ENCODE measurements at regions of chr20 and their contacts with region 1.

Region 1: GRCh38 chr20:2742934-2743559 is 50.5 kb downstream of the EBF4 start:
- DNase-seq: peak; percentile 92
- H3K4me3 Mint-ChIP-seq: peak overlapping the region; percentile 66
- H3K27ac Mint-ChIP-seq: peak overlapping the region; percentile 79
- H3K4me1 Mint-ChIP-seq: peaks cover 31% of the 10 kb centered on the region
- H3K27me3 Mint-ChIP-seq: peaks cover 19% of the 10 kb centered on the region

Region 2: GRCh38 chr20:2680046-2680445 is 63.0 kb before region 1 on chr20:
- intact Hi-C with region 1: no loop called
- DNase-seq: no peak
- H3K4me3 Mint-ChIP-seq: no peak overlapping the region
- H3K27ac Mint-ChIP-seq: no peak overlapping the region
- H3K4me1 Mint-ChIP-seq: peaks cover 1% of the 10 kb centered on the region
- H3K27me3 Mint-ChIP-seq: peaks cover 28% of the 10 kb centered on the region

Region 3: DNA sequence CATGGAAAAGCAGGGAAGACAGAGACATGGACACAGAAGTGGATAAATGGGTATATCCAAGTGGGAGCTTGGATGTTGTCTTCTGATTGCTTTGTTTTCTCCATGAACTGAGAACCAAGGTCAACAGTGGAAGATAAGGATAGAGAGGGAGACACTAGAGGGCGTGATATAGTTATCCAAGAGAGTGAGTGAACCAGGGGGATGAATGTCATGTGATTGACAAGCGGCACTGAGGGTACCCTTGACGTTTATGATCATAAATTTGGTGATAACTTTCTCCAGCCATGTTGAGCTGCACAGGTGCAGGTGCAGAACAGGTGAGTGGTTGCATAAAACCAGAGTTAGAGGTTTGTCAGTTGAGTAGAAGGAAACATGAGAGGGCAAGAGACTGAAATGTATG is 29.8 kb before region 1 on chr20:
- intact Hi-C with region 1: loop called (anchors 1 kb)
- DNase-seq: peak; percentile 62
- H3K4me3 Mint-ChIP-seq: no peak overlapping the region
- H3K27ac Mint-ChIP-seq: no peak overlapping the region
- H3K4me1 Mint-ChIP-seq: no peaks in the 10 kb centered on the region
- H3K27me3 Mint-ChIP-seq: peaks cover 2% of the 10 kb centered on the region

Region 4: DNA sequence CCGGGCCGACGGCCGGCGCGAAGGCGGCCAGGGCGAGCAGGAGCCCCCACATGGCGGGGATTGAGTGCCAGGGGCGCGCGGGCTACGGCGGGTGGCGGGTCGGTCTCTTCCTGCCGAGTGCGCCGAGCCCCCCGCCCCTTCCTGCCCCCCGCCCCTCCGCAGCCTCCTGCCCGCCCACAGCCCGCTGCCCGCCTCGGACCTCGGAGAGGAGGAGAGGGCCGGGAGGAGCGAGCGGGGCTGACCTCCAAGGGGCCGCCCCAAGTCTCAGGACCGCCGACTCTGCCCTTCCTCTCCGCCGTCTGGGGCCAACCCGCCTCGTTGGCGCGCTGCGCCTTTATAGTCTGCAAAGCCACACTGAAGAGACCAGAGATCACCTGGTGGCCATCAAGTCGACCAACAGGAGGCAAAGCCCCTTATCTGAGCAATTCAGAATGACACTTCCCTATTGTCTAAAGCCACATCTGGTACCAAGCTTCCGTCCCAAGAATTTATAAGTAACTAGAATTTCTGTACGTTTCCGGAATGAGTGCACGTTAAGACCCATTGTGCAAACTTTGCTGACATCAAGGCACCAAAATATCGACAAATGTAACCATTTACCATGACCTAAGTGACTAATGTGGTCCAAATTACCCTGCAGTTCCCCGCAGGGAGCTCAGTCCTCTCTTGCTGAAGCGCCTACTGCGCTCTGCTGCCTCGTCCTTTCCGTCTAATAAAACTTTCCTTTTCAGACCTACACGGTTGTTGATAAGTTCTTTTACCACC is 57.7 kb after region 1 on chr20 and contains the start of gene CPXM1:
- intact Hi-C with region 1: no loop called
- DNase-seq: peak; percentile 66
- H3K4me3 Mint-ChIP-seq: peak within 1 kb of the TSS; percentile 88
- H3K27ac Mint-ChIP-seq: peak within 1 kb of the TSS; percentile 79
- H3K4me1 Mint-ChIP-seq: peaks cover 21% of the 10 kb centered on the region
- H3K27me3 Mint-ChIP-seq: peaks cover 59% of the 10 kb centered on the region
- total RNA-seq, gene CPXM1: 0.14 and 0.38 TPM in 2 replicates

Region 5: DNA sequence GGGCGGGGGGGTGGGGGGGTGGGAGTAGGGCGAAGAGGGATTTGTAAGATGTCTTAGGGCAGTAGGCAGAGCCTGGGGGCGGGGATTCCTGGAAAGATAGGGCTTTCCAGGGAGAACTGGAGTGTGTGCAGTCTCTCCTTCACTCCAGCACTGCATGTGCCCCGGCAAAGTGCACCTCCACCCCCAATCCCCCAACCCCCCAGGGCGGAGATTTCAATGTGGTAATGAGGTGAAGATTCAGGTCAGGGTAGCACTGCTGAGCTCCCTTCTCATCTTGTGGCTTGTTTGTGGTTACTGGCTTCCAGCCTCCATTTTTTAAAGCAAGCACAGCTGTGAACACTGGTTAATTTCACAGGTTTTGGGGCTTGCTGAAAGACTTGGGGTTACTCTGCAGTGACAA is 79.0 kb after region 1 on chr20:
- intact Hi-C with region 1: no loop called
- DNase-seq: peak; percentile 88
- H3K4me3 Mint-ChIP-seq: peak overlapping the region; percentile 70
- H3K27ac Mint-ChIP-seq: no peak overlapping the region
- H3K4me1 Mint-ChIP-seq: peaks cover 28% of the 10 kb centered on the region
- H3K27me3 Mint-ChIP-seq: peaks cover 47% of the 10 kb centered on the region

Measured in activated CD4-positive, alpha-beta T cell treated with anti-CD3 and anti-CD28 coated beads, Interleukin-2, amount 10 ng/mL, durations not matched to agents 24 days and 14 days (primary cell).